Activated CD4-positive, alpha-beta memory T cell treated with anti-CD3 and anti-CD28 coated beads for 36 hours (primary cell): ENCODE measurements at regions of chr2 and their contacts with region 1.

Region 1: GRCh38 chr2:68441179-68441993 is 25.7 kb downstream of the FBXO48 start:
- DNase-seq: peak; percentile 89
- H3K4me3 Mint-ChIP-seq: no peak overlapping the region
- H3K27ac Mint-ChIP-seq: peak overlapping the region; percentile 73
- H3K4me1 Mint-ChIP-seq: peaks cover 14% of the 10 kb centered on the region
- H3K27me3 Mint-ChIP-seq: no peaks in the 10 kb centered on the region

Region 2: DNA sequence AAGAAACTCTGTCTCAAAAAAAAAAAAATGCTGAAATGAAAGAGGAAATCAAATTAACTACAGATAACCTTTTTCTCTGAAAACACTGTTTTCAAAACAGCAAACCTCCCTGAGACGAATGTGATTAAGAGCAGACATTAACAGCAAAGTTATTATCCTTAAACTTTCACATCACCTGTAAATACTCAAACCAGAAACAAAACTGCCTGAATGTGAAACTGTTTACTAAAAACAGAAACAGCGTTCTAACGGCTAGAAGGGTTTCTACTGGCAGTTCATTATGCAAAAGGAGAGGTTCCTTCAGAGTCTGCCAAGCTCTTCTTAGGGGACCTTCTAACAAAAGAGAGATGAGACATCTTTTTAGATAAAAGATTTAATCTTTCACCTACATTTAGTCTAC is 237.8 kb before region 1 on chr2:
- CTCF ChIA-PET with region 1: interaction called, 3 read pairs
- POLR2A ChIA-PET with region 1: no interaction called
- intact Hi-C with region 1: loop called (anchors 5 kb)
- DNase-seq: no peak
- H3K4me3 Mint-ChIP-seq: peak overlapping the region; percentile 51
- H3K27ac Mint-ChIP-seq: peak overlapping the region; percentile 84
- H3K4me1 Mint-ChIP-seq: peaks cover 72% of the 10 kb centered on the region
- H3K27me3 Mint-ChIP-seq: no peaks in the 10 kb centered on the region

Region 3: GRCh38 chr2:68282811-68283418 is 158.5 kb before region 1 on chr2:
- CTCF ChIA-PET with region 1: interaction called, 3 read pairs
- POLR2A ChIA-PET with region 1: no interaction called
- intact Hi-C with region 1: loop called (anchors 5 kb)
- DNase-seq: no peak
- H3K4me3 Mint-ChIP-seq: no peak overlapping the region
- H3K27ac Mint-ChIP-seq: no peak overlapping the region
- H3K4me1 Mint-ChIP-seq: no peaks in the 10 kb centered on the region
- H3K27me3 Mint-ChIP-seq: peaks cover 7% of the 10 kb centered on the region

Region 4: GRCh38 chr2:68362069-68362468 is 79.3 kb before region 1 on chr2:
- CTCF ChIA-PET with region 1: interaction called, 44 read pairs
- POLR2A ChIA-PET with region 1: no interaction called
- intact Hi-C with region 1: loop called (anchors 1 kb)
- DNase-seq: peak; percentile 87
- H3K4me3 Mint-ChIP-seq: peak overlapping the region; percentile 48
- H3K27ac Mint-ChIP-seq: no peak overlapping the region
- H3K4me1 Mint-ChIP-seq: peaks cover 12% of the 10 kb centered on the region
- H3K27me3 Mint-ChIP-seq: no peaks in the 10 kb centered on the region

Region 5: GRCh38 chr2:68385220-68385906 is 56.0 kb before region 1 on chr2:
- CTCF ChIA-PET with region 1: interaction called, 11 read pairs
- POLR2A ChIA-PET with region 1: no interaction called
- intact Hi-C with region 1: loop called (anchors 1 kb)
- DNase-seq: peak; percentile 62
- H3K4me3 Mint-ChIP-seq: no peak overlapping the region
- H3K27ac Mint-ChIP-seq: no peak overlapping the region
- H3K4me1 Mint-ChIP-seq: peaks cover 41% of the 10 kb centered on the region
- H3K27me3 Mint-ChIP-seq: no peaks in the 10 kb centered on the region

Region 6: DNA sequence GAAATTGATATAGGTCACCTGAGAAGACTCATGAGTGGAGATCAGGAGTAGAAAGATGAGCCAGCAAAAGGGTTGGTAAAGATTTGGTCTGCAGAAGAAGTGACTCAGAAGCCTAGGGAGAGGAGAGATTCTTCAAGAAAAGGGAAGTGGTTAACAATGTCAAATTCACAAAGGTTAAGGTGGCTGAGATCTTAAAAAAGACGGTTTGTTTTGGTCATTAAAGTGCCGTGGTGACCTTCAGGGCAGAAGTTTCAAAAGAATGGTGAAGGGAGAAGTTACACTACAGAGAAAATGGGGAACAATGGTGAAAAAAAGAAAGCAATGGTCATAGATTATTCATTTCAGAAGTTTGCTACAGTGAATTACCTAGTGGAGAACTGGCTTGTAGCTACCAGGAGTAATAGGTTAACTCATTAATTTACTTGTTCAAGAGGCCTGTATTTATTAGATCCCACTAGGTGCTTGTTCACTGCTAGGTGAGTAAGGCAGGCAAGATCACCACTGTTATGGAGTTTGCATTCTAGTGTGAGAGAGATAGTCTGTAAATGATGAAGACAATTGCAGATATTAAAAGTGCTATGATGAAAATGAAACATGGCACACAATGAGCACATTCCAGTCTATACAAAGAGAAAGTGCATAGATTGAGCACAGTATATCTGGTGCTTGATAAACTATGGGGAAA is 17.3 kb before region 1 on chr2:
- CTCF ChIA-PET with region 1: interaction called, 20 read pairs
- POLR2A ChIA-PET with region 1: no interaction called
- intact Hi-C with region 1: loop called (anchors 1 kb)
- DNase-seq: no peak
- H3K4me3 Mint-ChIP-seq: no peak overlapping the region
- H3K27ac Mint-ChIP-seq: no peak overlapping the region
- H3K4me1 Mint-ChIP-seq: peaks cover 18% of the 10 kb centered on the region
- H3K27me3 Mint-ChIP-seq: no peaks in the 10 kb centered on the region

Region 7: GRCh38 chr2:68556381-68556780 is 115.0 kb after region 1 on chr2:
- CTCF ChIA-PET with region 1: no interaction called
- POLR2A ChIA-PET with region 1: no interaction called
- intact Hi-C with region 1: no loop called
- DNase-seq: no peak
- H3K4me3 Mint-ChIP-seq: no peak overlapping the region
- H3K27ac Mint-ChIP-seq: no peak overlapping the region
- H3K4me1 Mint-ChIP-seq: peaks cover 8% of the 10 kb centered on the region
- H3K27me3 Mint-ChIP-seq: no peaks in the 10 kb centered on the region